ENCODE measurements at regions of chr16 and their contacts with region 1.

Region 1: GRCh38 chr16:66406534-66407221 is 20.4 kb upstream of the BEAN1 start:
- DNase-seq: peak; percentile 64
- ATAC-seq: peak; percentile 87
- H3K4me3 ChIP-seq: peak overlapping the region; percentile 67 to 70
- H3K27ac ChIP-seq: peak overlapping the region; percentile 59
- H3K4me1 ChIP-seq: peaks cover 20 to 37% of the 10 kb centered on the region in 2 experiments
- H3K27me3 ChIP-seq: 0 out of 2 replicates have a peak, but pooled peaks cover 3% of the 10 kb centered on the region
- CTCF ChIP-seq: peak; percentile 71 to 93 (median 89)
- POLR2A ChIP-seq: peak; percentile 49
- RAD21 ChIP-seq: peak; percentile 98

Region 2: DNA sequence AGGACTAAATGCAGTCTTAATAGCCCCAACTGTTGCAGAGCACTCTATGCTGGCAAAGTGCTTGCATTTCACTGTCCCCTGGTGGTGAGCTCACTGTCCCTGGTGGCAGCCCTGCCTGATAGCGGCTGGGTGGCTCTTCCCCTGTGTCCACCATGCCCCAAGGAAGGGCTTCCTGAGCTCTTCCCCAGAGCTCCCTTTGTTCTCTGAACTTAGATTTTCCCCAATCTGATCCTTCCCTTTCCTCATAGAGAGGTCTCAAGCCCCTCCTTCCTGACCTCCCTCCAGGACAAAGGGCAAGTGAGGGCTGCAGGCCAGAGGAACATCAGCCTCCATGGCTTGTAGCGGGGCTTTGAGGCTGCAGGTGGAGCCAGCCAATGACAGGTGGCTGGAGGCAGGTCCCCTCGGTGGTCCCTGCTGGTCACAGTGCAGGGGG is 37.4 kb after region 1 on chr16:
- CTCF ChIA-PET with region 1: interaction called, 13 read pairs
- POLR2A ChIA-PET with region 1: no interaction called
- RAD21 ChIA-PET with region 1: interaction called in 1 of 2 experiments, 5 read pairs
- intact Hi-C with region 1: no loop called
- DNase-seq: no peak
- ATAC-seq: peak; percentile 88
- H3K4me3 ChIP-seq: no peak overlapping the region
- H3K27ac ChIP-seq: no peak overlapping the region
- H3K4me1 ChIP-seq: 0 out of 4 replicates have a peak, but pooled peaks cover 0 to 3% of the 10 kb centered on the region in 2 experiments
- H3K27me3 ChIP-seq: peaks cover 26% of the 10 kb centered on the region; the same call in 1 of the 2 replicates
- CTCF ChIP-seq: peak in 2 of 3 experiments; percentile 38 to 49; a peak in 3 of 6 replicates
- POLR2A ChIP-seq: no peak
- RAD21 ChIP-seq: peak; percentile 40

Region 3: GRCh38 chr16:66483689-66484481 is 77.2 kb after region 1 on chr16:
- CTCF ChIA-PET with region 1: interaction called, 14 read pairs
- POLR2A ChIA-PET with region 1: no interaction called
- RAD21 ChIA-PET with region 1: interaction called, 4 to 9 read pairs
- intact Hi-C with region 1: loop called (anchors 1 kb)
- DNase-seq: peak; percentile 59
- ATAC-seq: peak; percentile 91
- H3K4me3 ChIP-seq: no peak overlapping the region
- H3K27ac ChIP-seq: no peak overlapping the region
- H3K4me1 ChIP-seq: peaks cover under 1 to 15% of the 10 kb centered on the region in 2 experiments; a peak in 3 of 4 replicates
- H3K27me3 ChIP-seq: no peaks in the 10 kb centered on the region
- CTCF ChIP-seq: peak; percentile 96 to 98 (median 97)
- POLR2A ChIP-seq: no peak
- RAD21 ChIP-seq: peak; percentile 98

Region 4: GRCh38 chr16:66516808-66517585 is 110.3 kb after region 1 on chr16:
- CTCF ChIA-PET with region 1: interaction called, 15 read pairs
- POLR2A ChIA-PET with region 1: no interaction called
- RAD21 ChIA-PET with region 1: interaction called, 3 to 5 read pairs
- intact Hi-C with region 1: loop called (anchors 1 kb)
- DNase-seq: peak; percentile 94
- ATAC-seq: peak; percentile 91
- H3K4me3 ChIP-seq: peak overlapping the region; percentile 30 to 33
- H3K27ac ChIP-seq: peak overlapping the region; percentile 78
- H3K4me1 ChIP-seq: peaks cover 55 to 70% of the 10 kb centered on the region in 2 experiments
- H3K27me3 ChIP-seq: no peaks in the 10 kb centered on the region
- CTCF ChIP-seq: no peak
- POLR2A ChIP-seq: no peak
- RAD21 ChIP-seq: no peak

Region 5: DNA sequence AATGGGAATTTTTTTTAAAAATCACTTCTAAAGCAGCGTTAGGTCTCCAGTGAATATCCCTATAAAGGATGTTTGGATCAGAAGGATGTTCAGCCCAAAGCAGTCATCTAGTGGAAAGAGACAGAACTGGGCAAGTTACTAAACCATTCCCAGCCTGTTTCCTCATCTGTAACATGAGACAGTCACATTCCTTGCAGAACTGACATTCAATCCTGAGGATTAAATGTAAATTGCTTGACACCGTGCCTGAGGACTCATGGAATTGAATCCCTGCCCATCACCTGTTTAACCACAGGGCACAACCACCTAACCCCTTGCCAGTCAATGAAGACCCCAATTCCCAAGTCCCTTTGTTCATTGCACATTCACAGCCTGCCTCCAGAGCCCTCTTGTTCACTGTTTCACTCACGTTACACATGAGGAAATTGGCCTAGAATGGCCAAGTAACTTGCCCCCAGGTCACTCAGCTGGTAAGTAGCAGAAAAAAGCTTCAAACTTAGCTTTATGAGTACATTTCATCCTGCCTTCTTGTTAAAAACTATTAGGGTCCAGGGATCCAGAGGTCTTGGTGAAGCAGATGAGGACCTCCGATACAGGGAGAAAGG is 174.0 kb after region 1 on chr16:
- CTCF ChIA-PET with region 1: interaction called, 3 read pairs
- POLR2A ChIA-PET with region 1: no interaction called
- RAD21 ChIA-PET with region 1: no interaction called
- intact Hi-C with region 1: loop called (anchors 5 kb)
- DNase-seq: no peak
- ATAC-seq: peak; percentile 77
- H3K4me3 ChIP-seq: no peak overlapping the region
- H3K27ac ChIP-seq: no peak overlapping the region
- H3K4me1 ChIP-seq: peaks cover 18 to 20% of the 10 kb centered on the region in 2 experiments
- H3K27me3 ChIP-seq: no peaks in the 10 kb centered on the region
- CTCF ChIP-seq: no peak
- POLR2A ChIP-seq: no peak
- RAD21 ChIP-seq: 0 out of 2 replicates have a peak, but pooled peaks have one; percentile 8

Region 6: GRCh38 chr16:66728117-66728787 is 321.6 kb after region 1 on chr16:
- CTCF ChIA-PET with region 1: no interaction called
- POLR2A ChIA-PET with region 1: no interaction called
- RAD21 ChIA-PET with region 1: no interaction called
- intact Hi-C with region 1: loop called (anchors 10 kb)
- DNase-seq: peak; percentile 28
- ATAC-seq: peak; percentile 90
- H3K4me3 ChIP-seq: no peak overlapping the region
- H3K27ac ChIP-seq: no peak overlapping the region
- H3K4me1 ChIP-seq: no peaks in the 10 kb centered on the region
- H3K27me3 ChIP-seq: no peaks in the 10 kb centered on the region
- CTCF ChIP-seq: peak; percentile 54 to 79 (median 75)
- POLR2A ChIP-seq: no peak
- RAD21 ChIP-seq: peak; percentile 64

Region 7: DNA sequence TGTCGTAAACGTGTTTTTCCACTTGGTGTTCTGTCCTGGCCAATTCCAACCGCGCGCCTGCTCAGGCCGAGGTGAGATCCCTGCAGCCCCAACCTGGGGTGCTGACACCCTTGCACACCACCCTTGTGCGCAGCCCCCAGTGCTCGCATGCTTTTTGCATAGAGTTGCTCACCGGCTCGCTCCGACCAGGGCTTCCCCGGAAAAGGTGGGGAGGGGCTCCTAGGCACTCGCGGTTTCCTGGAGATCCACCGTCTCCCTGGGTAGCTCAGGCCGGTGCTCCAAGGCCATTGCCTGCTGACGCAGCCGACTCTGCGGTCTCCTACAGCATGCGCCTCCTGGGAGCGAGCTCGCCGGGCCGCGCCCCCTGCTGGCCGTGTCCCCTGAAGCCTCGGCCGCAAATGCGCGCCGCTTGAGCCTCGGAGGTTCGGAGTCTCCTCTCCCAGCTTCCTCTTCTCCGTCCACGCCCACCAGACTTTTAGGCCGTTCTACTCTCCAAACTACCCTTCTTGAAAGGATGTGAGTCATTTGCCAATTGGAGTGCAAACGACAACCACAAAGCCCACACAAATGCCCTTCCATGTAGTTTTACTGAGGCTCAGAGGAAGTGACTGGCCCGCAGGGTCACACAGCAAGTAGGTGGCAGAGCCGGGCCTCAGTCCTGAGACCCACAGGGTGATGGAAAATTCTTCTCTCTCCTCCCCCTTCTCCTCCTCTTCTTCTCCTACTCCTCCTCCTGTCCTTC is 466.4 kb after region 1 on chr16:
- CTCF ChIA-PET with region 1: interaction called, 15 read pairs
- POLR2A ChIA-PET with region 1: interaction called, 4 read pairs
- RAD21 ChIA-PET with region 1: interaction called, 3 read pairs
- intact Hi-C with region 1: loop called (anchors 2 kb)
- DNase-seq: peak; percentile 89
- ATAC-seq: peak; percentile 95
- H3K4me3 ChIP-seq: peak overlapping the region; percentile 42 to 57
- H3K27ac ChIP-seq: peak overlapping the region; percentile 65
- H3K4me1 ChIP-seq: peaks cover 12 to 27% of the 10 kb centered on the region in 2 experiments
- H3K27me3 ChIP-seq: no peaks in the 10 kb centered on the region
- CTCF ChIP-seq: peak; percentile 74 to 95 (median 91)
- POLR2A ChIP-seq: no peak
- RAD21 ChIP-seq: no peak